Posterior cingulate gyrus (tissue), 11 donors: ENCODE measurements at regions of chrX and their contacts with region 1.

Region 1: DNA sequence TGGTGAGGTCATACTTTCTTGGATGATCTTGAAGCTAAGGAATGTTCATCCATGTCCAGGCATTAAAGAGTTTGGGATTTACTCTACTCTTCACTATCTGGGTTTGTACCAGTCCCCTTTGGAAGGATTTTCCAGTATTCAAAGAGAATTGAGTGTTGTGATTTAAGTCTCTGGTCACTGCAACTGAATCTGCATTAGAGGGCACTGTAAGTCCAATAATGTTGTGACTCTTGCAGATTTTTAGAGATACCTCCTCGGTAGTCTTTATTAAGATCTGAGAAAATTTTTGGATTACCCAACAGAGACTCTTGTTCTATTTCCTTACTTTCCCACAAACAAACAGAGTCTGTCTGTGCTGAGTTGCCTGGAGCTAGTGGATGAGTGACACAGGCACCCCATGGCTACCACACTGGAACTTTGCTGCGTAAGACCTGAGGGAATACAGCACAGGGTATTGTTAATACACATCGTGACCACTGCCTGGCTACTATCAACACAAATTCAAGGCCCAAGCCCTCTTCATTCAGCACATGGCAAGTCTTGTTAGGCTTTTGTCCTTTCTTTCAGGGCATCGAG is 357.1 kb upstream of the KLHL4 start:
- DNase-seq: peak in 1 of 10 donors; percentile 22

Region 2: DNA sequence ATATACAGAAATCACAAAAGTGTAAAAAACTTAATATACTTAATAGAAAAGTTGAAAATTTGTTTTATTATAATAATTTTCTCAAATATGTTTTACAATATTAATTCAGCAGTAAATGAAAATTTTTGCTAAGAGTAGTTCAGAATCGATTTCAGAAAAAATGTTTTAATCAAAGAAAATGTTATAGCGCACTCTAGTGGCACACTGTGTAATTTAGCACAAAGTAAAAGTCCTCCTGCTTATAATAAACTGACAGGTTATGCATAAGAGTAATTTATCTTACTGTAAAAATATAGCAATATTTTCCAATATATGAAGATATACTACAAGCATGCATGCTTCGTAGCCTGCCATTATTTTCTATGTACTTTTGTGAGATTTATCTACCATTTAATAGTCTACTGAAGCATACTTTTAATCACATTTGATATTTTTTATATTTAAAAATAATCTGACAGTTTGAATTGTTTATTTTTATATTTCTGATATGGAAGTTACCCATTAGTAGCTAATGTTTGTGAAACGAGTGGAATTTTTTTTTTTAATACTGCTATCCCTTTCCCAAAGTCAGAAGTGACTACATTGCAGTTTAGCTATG is 139.1 kb after region 1 on chrX:
- intact Hi-C with region 1: loop called (anchors 2 kb)
- DNase-seq: no peak